HEK293 (cell line): ENCODE measurements at regions of chr5 and their contacts with region 1.

Region 1: DNA sequence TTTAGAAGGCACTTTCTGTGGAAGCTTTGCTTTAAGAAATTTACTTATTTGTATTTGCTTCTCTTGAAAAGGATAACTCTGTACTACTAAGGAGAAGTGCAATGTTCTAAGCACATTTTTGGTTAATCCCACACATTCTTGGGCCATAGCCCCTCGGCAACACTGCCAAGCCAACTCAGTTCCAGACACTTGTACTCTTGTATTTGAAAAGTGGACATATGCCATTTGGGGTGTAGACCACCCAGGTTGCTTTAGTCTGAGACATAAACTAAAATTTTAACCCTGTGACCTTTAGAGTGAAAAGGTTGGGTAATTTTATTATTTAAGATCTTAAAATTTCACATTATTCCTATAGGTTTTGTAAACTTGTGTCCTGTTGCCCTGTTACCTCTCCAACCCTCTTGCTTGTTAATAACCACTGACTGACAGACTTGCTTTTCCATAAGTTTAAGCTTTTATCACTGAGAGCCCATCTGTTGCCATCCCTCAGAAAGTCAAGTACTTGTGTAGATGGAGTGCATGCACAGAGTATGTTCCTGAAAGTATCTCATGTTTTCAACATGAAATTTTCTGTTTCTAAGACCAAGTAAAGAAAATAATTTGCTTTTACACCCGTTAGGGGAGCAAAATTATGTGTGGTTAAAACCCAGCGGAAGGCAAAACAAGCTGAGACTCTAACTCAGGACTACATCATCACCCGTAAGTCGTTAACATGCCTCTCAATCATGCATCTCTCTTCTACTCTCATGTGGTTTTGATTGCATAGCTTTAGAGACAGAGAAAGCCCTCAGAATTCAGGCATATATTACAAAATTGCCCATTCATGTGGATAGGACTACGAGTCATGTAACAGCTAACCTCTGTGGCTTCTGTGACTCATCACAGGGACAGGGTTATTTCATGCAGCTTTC is 117.3 kb downstream of the GDNF start:
- H3K4me3 ChIP-seq: no peak overlapping the region
- H3K27ac ChIP-seq: no peak overlapping the region
- H3K4me1 ChIP-seq: peaks cover 23% of the 10 kb centered on the region
- CTCF ChIP-seq: no peak

Region 2: GRCh38 chr5:37575541-37576489 is 146.7 kb before region 1 on chr5:
- CTCF ChIA-PET with region 1: no interaction called
- POLR2A ChIA-PET with region 1: no interaction called
- H3K4me3 ChIP-seq: no peak overlapping the region
- H3K27ac ChIP-seq: no peak overlapping the region
- H3K4me1 ChIP-seq: no peaks in the 10 kb centered on the region; the same call in none of the 2 replicates
- CTCF ChIP-seq: no peak

Region 3: GRCh38 chr5:37683072-37683471 is 39.4 kb before region 1 on chr5:
- CTCF ChIA-PET with region 1: no interaction called
- POLR2A ChIA-PET with region 1: no interaction called
- H3K4me3 ChIP-seq: no peak overlapping the region
- H3K27ac ChIP-seq: no peak overlapping the region
- H3K4me1 ChIP-seq: 0 out of 2 replicates have a peak, but pooled peaks cover 2% of the 10 kb centered on the region
- CTCF ChIP-seq: no peak

Region 4: GRCh38 chr5:37738057-37738691 is 15.7 kb after region 1 on chr5:
- CTCF ChIA-PET with region 1: interaction called, 117 read pairs
- POLR2A ChIA-PET with region 1: interaction called, 14 read pairs
- H3K4me3 ChIP-seq: no peak overlapping the region
- H3K27ac ChIP-seq: no peak overlapping the region; the same call in 1 of the 2 replicates
- H3K4me1 ChIP-seq: peaks cover 41% of the 10 kb centered on the region
- CTCF ChIP-seq: no peak

Region 5: GRCh38 chr5:37751227-37751626 is 28.7 kb after region 1 on chr5:
- CTCF ChIA-PET with region 1: interaction called, 10 read pairs
- POLR2A ChIA-PET with region 1: no interaction called
- H3K4me3 ChIP-seq: no peak overlapping the region
- H3K27ac ChIP-seq: no peak overlapping the region
- H3K4me1 ChIP-seq: no peaks in the 10 kb centered on the region
- CTCF ChIP-seq: no peak

Region 6: GRCh38 chr5:37757980-37758583 is 35.6 kb after region 1 on chr5:
- CTCF ChIA-PET with region 1: interaction called, 11 read pairs
- POLR2A ChIA-PET with region 1: no interaction called
- H3K4me3 ChIP-seq: no peak overlapping the region
- H3K27ac ChIP-seq: no peak overlapping the region
- H3K4me1 ChIP-seq: no peaks in the 10 kb centered on the region
- CTCF ChIP-seq: no peak

Region 7: DNA sequence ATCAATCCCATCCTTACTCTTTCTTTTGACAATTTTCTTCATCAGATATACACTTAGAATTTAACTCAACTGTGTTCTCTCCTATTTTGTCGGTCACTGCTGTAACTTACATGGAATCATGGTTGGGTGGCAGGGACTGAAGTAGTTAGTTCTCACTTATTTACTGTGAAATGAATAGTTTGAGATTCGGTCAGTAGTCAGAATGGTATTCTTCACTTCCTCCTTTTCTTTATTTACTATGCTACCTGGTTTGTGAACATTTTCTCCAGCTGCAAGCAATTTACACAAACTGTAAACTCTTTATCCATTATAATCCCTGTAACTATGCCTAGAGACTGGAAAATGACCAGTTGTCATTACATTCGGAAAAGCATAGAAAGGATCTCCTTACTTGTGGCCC is 158.9 kb after region 1 on chr5:
- CTCF ChIA-PET with region 1: no interaction called
- POLR2A ChIA-PET with region 1: no interaction called
- H3K4me3 ChIP-seq: no peak overlapping the region
- H3K27ac ChIP-seq: no peak overlapping the region
- H3K4me1 ChIP-seq: no peaks in the 10 kb centered on the region
- CTCF ChIP-seq: no peak

Region 8: GRCh38 chr5:38099205-38100168 is 377.0 kb after region 1 on chr5:
- CTCF ChIA-PET with region 1: no interaction called
- POLR2A ChIA-PET with region 1: no interaction called
- H3K4me3 ChIP-seq: no peak overlapping the region
- H3K27ac ChIP-seq: no peak overlapping the region
- H3K4me1 ChIP-seq: no peaks in the 10 kb centered on the region
- CTCF ChIP-seq: no peak

Region 9: DNA sequence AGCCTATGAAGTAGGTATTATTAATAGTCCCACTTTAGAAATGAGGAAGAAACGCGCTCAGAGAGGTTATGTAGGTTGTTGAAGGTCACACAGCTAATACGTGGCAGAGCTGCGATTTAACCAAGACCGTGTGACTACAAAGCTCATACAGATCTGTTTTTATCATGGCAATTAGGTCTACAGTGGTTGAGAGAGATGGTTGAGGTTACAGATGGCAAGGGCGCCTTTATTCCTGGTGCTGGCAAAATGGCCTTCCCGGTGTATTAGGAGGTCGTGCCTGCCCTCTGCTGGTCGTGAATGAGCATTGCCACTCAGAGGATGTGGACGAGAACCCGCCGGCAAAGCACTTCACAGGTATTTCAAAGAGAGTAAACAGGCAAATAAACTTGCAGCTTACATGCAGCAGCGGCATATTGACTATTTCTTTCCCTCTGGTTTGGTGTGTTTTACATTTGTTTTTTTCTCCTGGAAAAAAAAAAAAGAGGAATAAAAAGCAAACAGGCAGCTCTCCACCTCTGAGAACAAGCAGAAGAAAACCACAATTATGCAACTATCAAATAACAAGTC is 470.6 kb after region 1 on chr5:
- CTCF ChIA-PET with region 1: interaction called, 34 read pairs
- POLR2A ChIA-PET with region 1: no interaction called
- H3K4me3 ChIP-seq: no peak overlapping the region
- H3K27ac ChIP-seq: no peak overlapping the region
- H3K4me1 ChIP-seq: 0 out of 2 replicates have a peak, but pooled peaks cover 7% of the 10 kb centered on the region
- CTCF ChIP-seq: peak; percentile 87